Naive thymus-derived CD4-positive, alpha-beta T cell (primary cell): ENCODE measurements at regions of chr9 and their contacts with region 1.

Region 1: DNA sequence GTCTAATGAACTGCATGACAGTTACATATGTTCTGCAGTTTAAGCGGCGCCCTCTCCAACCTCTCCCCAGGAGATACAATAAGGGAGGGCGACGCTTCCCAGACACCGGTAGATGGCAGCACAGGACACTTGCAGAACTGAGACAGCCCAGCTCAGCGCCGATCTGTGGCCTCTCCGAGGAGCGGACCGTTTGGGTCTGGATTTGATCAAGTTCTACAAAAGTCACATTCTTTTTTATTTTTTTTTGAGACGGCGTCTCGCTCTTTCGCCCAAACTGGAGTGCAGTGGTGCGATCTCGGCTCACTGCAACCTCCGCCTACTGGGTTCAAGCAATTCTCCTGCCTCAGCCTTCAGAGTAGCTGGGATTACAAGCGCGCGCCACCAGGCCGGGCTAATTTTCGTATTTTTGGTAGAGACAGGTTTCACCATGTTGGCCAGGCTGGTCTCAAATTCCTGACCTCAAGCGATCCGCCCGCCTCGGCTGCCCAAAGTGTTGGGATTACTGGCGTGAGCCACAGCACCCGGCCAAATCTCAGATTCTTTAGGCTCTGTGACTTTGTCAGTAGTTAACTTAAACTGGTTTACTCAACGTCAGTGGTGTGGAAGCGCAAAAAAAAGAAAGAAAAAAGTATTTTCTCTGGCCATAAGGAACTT is 1.4 kb upstream of the ATOSB start:
- DNase-seq: peak; percentile 67 to 91 (median 87)
- ATAC-seq: peak; percentile 77
- H3K4me3 ChIP-seq: peak overlapping the region; percentile 82
- H3K4me3 Mint-ChIP-seq: peak overlapping the region; percentile 88 to 100 (median 93)
- H3K27ac ChIP-seq: peak overlapping the region; percentile 79
- H3K27ac Mint-ChIP-seq: peak overlapping the region; percentile 89 to 98 (median 94)
- H3K4me1 ChIP-seq: peaks cover 26 to 33% of the 10 kb centered on the region in 2 donors
- H3K4me1 Mint-ChIP-seq: peaks cover 27 to 43% (median 41%) of the 10 kb centered on the region in 7 donors
- H3K27me3 ChIP-seq: no peaks in the 10 kb centered on the region
- H3K27me3 Mint-ChIP-seq: peaks cover 0 to 6% (median 0%) of the 10 kb centered on the region in 5 donors

Region 2: GRCh38 chr9:34328987-34329832 is 787.8 kb before region 1 on chr9 and contains the starts of genes KIF24 and NUDT2:
- CTCF ChIA-PET with region 1: no interaction called
- POLR2A ChIA-PET with region 1: no interaction called
- intact Hi-C with region 1: loop called in 1 of 2 experiments (anchors 1 kb)
- DNase-seq: peak; percentile 89 to 99 (median 96)
- ATAC-seq: peak; percentile 95
- H3K4me3 ChIP-seq: peak within 1 kb of the TSS; percentile 98
- H3K4me3 Mint-ChIP-seq: peak within 1 kb of the TSS; percentile 88 to 97 (median 94)
- H3K27ac ChIP-seq: peak within 1 kb of the TSS; percentile 94
- H3K27ac Mint-ChIP-seq: peak within 1 kb of the TSS; percentile 77 to 98 (median 95)
- H3K4me1 ChIP-seq: peaks cover 3 to 8% of the 10 kb centered on the region in 2 donors
- H3K4me1 Mint-ChIP-seq: peaks cover 11 to 45% (median 29%) of the 10 kb centered on the region in 7 donors
- H3K27me3 ChIP-seq: no peaks in the 10 kb centered on the region
- H3K27me3 Mint-ChIP-seq: no peaks in the 10 kb centered on the region
- total RNA-seq, gene KIF24: 0.11 to 6.0 (median 0.35) TPM
- total RNA-seq, gene NUDT2: 7.5 to 30.0 (median 22.7) TPM

Region 3: GRCh38 chr9:35071814-35072460 is 45.1 kb before region 1 on chr9:
- CTCF ChIA-PET with region 1: no interaction called
- POLR2A ChIA-PET with region 1: interaction called, 11 read pairs
- intact Hi-C with region 1: loop called in 1 of 2 experiments (anchors 1 kb)
- DNase-seq: peak in 8 of 9 donors; percentile 67 to 83 (median 71)
- ATAC-seq: peak; percentile 70
- H3K4me3 ChIP-seq: peak overlapping the region; percentile 53
- H3K4me3 Mint-ChIP-seq: peak overlapping the region; percentile 74 to 95 (median 88)
- H3K27ac ChIP-seq: peak overlapping the region; percentile 93
- H3K27ac Mint-ChIP-seq: peak overlapping the region; percentile 81 to 96 (median 91)
- H3K4me1 ChIP-seq: peaks cover 22 to 43% of the 10 kb centered on the region in 2 donors
- H3K4me1 Mint-ChIP-seq: peaks cover 34 to 66% (median 53%) of the 10 kb centered on the region in 7 donors
- H3K27me3 ChIP-seq: no peaks in the 10 kb centered on the region
- H3K27me3 Mint-ChIP-seq: peaks cover 0 to 3% (median 0%) of the 10 kb centered on the region in 5 donors

Region 4: GRCh38 chr9:35136861-35137260 is 19.8 kb after region 1 on chr9:
- CTCF ChIA-PET with region 1: no interaction called
- POLR2A ChIA-PET with region 1: no interaction called
- intact Hi-C with region 1: no loop called
- DNase-seq: no peak
- ATAC-seq: no peak
- H3K4me3 ChIP-seq: no peak overlapping the region
- H3K4me3 Mint-ChIP-seq: no peak overlapping the region
- H3K27ac ChIP-seq: no peak overlapping the region
- H3K27ac Mint-ChIP-seq: no peak overlapping the region
- H3K4me1 ChIP-seq: no peaks in the 10 kb centered on the region
- H3K4me1 Mint-ChIP-seq: no peaks in the 10 kb centered on the region
- H3K27me3 ChIP-seq: no peaks in the 10 kb centered on the region
- H3K27me3 Mint-ChIP-seq: peaks cover 0 to 4% (median 0%) of the 10 kb centered on the region in 5 donors

Region 5: GRCh38 chr9:35258676-35259474 is 141.8 kb after region 1 on chr9:
- CTCF ChIA-PET with region 1: interaction called, 19 read pairs
- POLR2A ChIA-PET with region 1: no interaction called
- intact Hi-C with region 1: loop called (anchors 1 kb)
- DNase-seq: peak in 7 of 9 donors; percentile 12 to 51 (median 38)
- ATAC-seq: peak; percentile 58
- H3K4me3 ChIP-seq: no peak overlapping the region
- H3K4me3 Mint-ChIP-seq: no peak overlapping the region
- H3K27ac ChIP-seq: no peak overlapping the region
- H3K27ac Mint-ChIP-seq: no peak overlapping the region
- H3K4me1 ChIP-seq: no peaks in the 10 kb centered on the region
- H3K4me1 Mint-ChIP-seq: no peaks in the 10 kb centered on the region
- H3K27me3 ChIP-seq: no peaks in the 10 kb centered on the region
- H3K27me3 Mint-ChIP-seq: peaks cover 0 to 12% (median 6%) of the 10 kb centered on the region in 5 donors

Region 6: DNA sequence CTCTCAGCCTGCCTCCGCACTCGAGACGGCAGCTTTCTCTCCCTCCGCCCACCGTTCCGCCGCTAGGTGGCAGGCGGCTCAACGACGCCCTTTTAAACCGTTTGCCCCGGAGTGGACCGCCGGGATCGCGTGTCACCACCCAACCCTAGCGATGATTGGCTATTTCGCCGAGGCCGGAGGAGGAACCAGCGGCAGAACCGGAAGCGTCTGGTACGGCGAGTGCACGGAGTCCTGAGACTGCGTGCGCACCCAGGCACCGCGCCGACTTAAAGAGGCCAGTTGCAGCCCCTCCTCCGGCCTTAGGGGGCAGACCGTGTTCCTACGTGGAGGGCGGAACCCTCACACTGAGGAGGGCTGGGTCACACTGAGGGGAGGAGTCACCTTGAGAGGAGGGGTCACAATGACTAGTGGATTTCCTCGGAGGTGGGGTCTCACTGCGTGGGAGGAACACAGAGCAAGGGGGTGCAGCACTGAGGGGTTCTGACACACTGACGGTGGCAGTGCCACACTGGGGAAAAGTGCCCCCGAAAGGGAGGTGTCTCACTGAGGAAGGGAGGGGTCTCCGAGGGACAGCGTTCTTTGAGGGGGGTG is 487.1 kb after region 1 on chr9:
- CTCF ChIA-PET with region 1: no interaction called
- POLR2A ChIA-PET with region 1: no interaction called
- intact Hi-C with region 1: loop called (anchors 1 kb)
- DNase-seq: peak; percentile 94 to 99 (median 99)
- ATAC-seq: peak; percentile 95
- H3K4me3 ChIP-seq: peak overlapping the region; percentile 65
- H3K4me3 Mint-ChIP-seq: peak overlapping the region; percentile 92 to 100 (median 98)
- H3K27ac ChIP-seq: peak overlapping the region; percentile 84
- H3K27ac Mint-ChIP-seq: peak overlapping the region; percentile 94 to 99 (median 98)
- H3K4me1 ChIP-seq: peaks cover 22 to 24% of the 10 kb centered on the region in 2 donors
- H3K4me1 Mint-ChIP-seq: peaks cover 21 to 42% (median 35%) of the 10 kb centered on the region in 7 donors
- H3K27me3 ChIP-seq: no peaks in the 10 kb centered on the region
- H3K27me3 Mint-ChIP-seq: no peaks in the 10 kb centered on the region

Region 7: DNA sequence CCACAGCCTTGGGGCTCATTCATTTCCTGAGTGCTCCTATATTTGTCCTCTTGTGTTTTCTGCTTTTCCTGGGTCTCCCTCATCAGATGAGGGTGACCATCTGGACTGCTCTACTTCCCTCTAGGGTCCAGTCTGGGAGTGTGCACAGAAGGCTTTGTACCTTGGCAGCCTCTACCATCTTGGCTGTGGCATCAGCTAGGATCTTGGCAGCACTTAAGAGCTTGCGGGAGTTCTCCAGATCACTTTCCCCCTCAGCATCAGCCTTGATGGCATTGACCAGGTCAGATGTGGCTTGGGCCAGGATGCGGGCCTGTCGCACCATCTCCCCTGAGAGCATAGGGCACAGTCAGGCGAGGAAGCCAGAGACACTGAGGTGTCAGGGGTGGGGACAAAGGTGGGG is 599.2 kb after region 1 on chr9:
- CTCF ChIA-PET with region 1: no interaction called
- POLR2A ChIA-PET with region 1: no interaction called
- intact Hi-C with region 1: no loop called
- DNase-seq: no peak
- ATAC-seq: no peak
- H3K4me3 ChIP-seq: no peak overlapping the region
- H3K4me3 Mint-ChIP-seq: no peak overlapping the region
- H3K27ac ChIP-seq: no peak overlapping the region
- H3K27ac Mint-ChIP-seq: peak overlapping the region in 4 of 9 donors; percentile 30 to 87 (median 77)
- H3K4me1 ChIP-seq: no peaks in the 10 kb centered on the region
- H3K4me1 Mint-ChIP-seq: peaks cover 0 to 5% (median 0%) of the 10 kb centered on the region in 7 donors
- H3K27me3 ChIP-seq: no peaks in the 10 kb centered on the region
- H3K27me3 Mint-ChIP-seq: no peaks in the 10 kb centered on the region

Region 8: GRCh38 chr9:35882263-35882848 is 765.3 kb after region 1 on chr9:
- CTCF ChIA-PET with region 1: no interaction called
- POLR2A ChIA-PET with region 1: no interaction called
- intact Hi-C with region 1: loop called in 1 of 2 experiments (anchors 1 kb)
- DNase-seq: peak; percentile 54 to 83 (median 71)
- ATAC-seq: peak; percentile 72
- H3K4me3 ChIP-seq: no peak overlapping the region
- H3K4me3 Mint-ChIP-seq: peak overlapping the region in 1 of 10 donors; percentile 18
- H3K27ac ChIP-seq: no peak overlapping the region
- H3K27ac Mint-ChIP-seq: no peak overlapping the region
- H3K4me1 ChIP-seq: no peaks in the 10 kb centered on the region
- H3K4me1 Mint-ChIP-seq: peaks cover 0 to 2% (median 0%) of the 10 kb centered on the region in 7 donors
- H3K27me3 ChIP-seq: no peaks in the 10 kb centered on the region
- H3K27me3 Mint-ChIP-seq: peaks cover 0 to 45% (median 8%) of the 10 kb centered on the region in 5 donors